Naive thymus-derived CD8-positive, alpha-beta T cell (primary cell): ENCODE measurements at regions of chr16 and their contacts with region 1.

Region 1: DNA sequence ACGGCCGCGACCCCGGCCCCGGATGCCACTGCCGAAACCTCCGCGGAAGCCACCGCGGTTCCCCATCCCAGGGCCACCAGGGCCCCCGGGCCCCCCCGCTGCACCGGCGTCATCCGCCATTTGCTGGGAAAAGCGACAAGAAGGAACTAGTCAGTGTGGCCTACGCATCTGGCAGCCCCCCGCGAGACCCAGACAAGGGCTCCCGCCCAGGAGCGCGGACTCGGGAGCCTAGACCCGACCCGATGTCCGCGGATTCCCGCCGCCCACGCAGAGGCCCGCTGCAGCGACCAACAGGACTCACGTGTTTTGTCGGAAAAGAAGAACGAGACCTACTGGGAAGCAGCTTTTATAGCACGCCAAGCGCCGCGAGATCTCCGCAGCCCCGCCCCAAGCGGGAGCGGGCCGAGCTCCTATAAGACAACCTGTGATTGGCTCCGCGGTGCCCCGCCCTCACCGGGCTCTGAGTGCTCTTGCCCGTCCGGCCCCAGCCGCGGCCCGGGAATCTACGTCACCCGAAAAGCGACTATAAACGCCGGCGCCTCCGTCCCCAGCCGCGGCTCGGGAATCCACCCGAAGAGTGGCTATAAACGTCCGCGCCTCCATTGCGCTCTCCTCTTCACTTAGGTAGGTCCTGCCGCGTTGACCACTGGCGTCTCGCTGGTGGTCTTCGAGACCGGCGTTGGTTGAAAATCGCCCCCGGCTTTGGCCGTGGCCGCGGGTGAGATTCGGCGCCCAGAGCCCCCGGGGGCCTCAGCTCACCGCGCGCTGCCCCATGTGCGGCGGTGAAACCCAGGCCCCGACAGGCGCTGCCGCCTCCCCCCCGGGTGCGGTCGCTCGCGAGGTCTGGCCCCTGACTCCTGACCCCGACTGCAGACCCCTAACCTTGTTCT is at the start of gene RPS2:
- DNase-seq: peak; percentile 95 to 100 (median 98)
- ATAC-seq: peak; percentile 88 to 93
- H3K4me3 Mint-ChIP-seq: peak within 1 kb of the TSS; percentile 89 to 97 (median 94)
- H3K27ac Mint-ChIP-seq: peak within 1 kb of the TSS; percentile 96 to 99 (median 97)
- H3K4me1 Mint-ChIP-seq: peaks cover 24 to 48% (median 48%) of the 10 kb centered on the region in 4 donors
- H3K27me3 Mint-ChIP-seq: no peaks in the 10 kb centered on the region
- polyA plus RNA-seq, gene RPS2: 6,506 to 7,644 (median 7,481) TPM

Region 2: DNA sequence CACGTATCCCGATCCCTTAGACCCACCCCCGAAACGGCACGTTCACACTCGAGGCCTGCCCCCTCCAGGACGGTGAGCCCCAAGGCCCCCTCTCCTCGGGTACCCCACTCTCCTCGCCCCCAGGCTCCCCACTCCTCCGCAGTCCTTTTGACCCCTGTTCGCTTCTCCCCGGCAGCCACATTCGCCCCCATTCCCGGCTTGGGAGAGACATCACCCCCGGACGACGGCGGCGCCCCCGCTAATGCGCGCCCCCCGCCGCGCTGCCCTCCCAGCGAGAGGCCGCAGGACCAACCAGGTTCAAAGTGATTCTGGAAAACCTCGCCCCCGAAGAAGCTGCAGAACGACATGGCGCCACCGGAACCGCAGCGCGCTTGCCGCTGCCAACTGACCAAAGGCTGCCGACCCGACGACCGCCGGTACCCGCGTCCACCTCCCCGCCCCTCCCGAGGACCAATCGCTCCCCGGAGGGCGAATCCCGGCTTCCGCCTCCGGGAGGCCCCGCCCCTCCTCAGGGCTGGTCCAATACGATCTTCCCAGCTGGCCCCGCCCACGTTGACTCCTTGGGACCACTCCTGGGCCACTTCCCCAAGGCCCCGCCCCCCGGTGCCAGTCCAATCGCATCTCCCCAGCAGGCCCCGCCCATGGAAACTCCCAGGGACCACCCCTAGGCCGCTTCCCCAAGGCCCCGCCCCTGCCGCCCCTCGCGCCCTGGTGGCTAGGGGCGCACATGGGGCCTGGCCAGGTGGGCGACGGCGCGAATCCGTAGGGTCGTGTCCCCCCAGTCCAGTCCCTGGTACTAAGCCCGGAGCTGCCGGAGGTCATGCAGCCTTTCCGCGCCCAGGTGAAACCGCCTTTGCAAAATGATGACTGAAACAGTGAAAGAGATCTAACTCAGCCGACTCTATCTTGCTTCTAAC is 21.7 kb before region 1 on chr16 and contains the start of gene MSRB1:
- POLR2A ChIA-PET with region 1: interaction called, 20 read pairs
- DNase-seq: peak; percentile 97 to 100 (median 98)
- ATAC-seq: peak; percentile 97 to 99
- H3K4me3 Mint-ChIP-seq: peak within 1 kb of the TSS; percentile 78 to 92 (median 86)
- H3K27ac Mint-ChIP-seq: peak within 1 kb of the TSS; percentile 46 to 88 (median 76)
- H3K4me1 Mint-ChIP-seq: peaks cover 0 to 24% (median 15%) of the 10 kb centered on the region in 4 donors
- H3K27me3 Mint-ChIP-seq: no peaks in the 10 kb centered on the region
- polyA plus RNA-seq, gene MSRB1: 13.9 to 19.1 (median 16.2) TPM

Region 3: DNA sequence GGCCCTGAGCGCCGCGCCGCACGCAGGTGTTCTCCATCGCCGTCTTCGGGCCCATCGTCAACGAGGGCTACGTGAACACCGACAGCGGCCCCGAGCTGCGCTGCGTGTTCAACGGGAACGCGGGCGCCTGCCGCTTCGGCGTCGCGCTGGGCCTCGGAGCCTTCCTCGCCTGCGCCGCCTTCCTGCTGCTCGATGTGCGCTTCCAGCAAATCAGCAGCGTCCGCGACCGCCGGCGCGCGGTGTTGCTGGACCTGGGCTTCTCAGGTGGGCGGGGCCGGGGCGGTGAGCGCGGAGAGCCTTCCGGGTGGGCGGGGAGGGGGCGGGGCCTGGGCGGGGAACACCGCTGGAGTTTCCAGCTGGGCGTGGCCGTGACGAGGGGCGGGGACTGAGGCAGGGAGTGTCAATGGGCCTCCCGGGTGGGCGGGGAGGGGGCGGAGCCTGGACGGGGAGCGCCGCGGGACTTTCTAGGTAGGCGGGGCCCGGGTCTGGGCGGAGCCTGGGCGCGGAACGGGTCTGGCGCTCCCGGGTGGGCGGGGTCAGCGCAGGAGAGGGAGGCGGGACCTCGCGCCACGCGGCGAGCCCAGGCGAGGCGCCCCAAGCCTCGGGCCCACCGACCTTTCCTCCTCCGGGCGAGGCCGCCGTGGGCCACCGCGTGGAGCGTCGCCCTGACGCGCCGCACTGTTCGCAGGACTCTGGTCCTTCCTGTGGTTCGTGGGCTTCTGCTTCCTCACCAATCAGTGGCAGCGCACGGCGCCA is 27.4 kb after region 1 on chr16:
- POLR2A ChIA-PET with region 1: interaction called, 47 read pairs
- DNase-seq: peak; percentile 86 to 100 (median 95)
- ATAC-seq: peak; percentile 72 to 82
- H3K4me3 Mint-ChIP-seq: peak overlapping the region in 9 of 10 donors; percentile 15 to 84 (median 71)
- H3K27ac Mint-ChIP-seq: peak overlapping the region in 6 of 10 donors; percentile 24 to 83 (median 72)
- H3K4me1 Mint-ChIP-seq: peaks cover 9 to 27% (median 18%) of the 10 kb centered on the region in 4 donors
- H3K27me3 Mint-ChIP-seq: peaks cover 2 to 27% (median 7%) of the 10 kb centered on the region in 5 donors

Region 4: DNA sequence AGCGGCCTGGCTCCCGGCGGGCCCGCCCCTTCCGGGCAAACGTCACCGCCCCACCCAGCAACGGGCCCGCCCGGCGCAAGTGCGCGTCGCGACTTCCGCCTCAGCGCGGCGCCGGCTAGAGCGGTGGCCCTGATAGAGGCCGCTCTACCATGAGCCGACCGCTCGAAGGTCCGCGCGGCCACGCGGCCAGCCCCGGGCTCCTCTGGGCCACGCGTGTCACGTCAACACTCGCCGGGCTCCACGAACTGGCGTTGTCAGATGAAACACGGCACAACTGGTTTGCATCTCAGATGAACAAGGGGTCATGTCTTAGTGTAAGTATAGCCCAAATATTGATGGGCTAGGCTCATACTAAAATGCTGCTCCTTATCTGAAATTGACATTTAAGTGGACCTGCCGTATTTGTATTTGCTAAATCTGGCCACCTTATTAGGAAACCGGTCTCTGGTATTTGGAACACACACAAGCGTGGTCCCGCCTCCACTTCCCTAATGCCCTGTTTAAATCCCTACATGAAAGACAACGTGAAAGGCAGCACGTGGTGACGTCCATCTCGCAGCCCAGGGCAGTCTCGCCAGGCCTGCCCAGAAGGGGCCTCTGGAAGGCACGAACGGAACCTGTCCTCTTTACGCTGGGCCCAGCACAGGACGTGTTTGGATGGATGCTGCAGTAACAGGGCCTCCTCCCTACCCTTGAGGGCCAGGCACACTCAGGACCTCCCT is 45.2 kb after region 1 on chr16 and contains the start of gene ZNF598:
- POLR2A ChIA-PET with region 1: interaction called, 17 read pairs
- DNase-seq: peak; percentile 59 to 89 (median 78)
- ATAC-seq: peak; percentile 88 to 92
- H3K4me3 Mint-ChIP-seq: peak within 1 kb of the TSS; percentile 78 to 94 (median 91)
- H3K27ac Mint-ChIP-seq: peak within 1 kb of the TSS; percentile 75 to 98 (median 98)
- H3K4me1 Mint-ChIP-seq: peaks cover 24 to 47% (median 41%) of the 10 kb centered on the region in 4 donors
- H3K27me3 Mint-ChIP-seq: no peaks in the 10 kb centered on the region
- polyA plus RNA-seq, gene ZNF598: 3.4 to 10.0 (median 3.6) TPM